Right cardiac atrium (tissue), 5 donors: ENCODE measurements at regions of chr9 and their contacts with region 1.

Region 1: GRCh38 chr9:757246-757881 is 84.1 kb upstream of the DMRT1 start:
- DNase-seq: peak in 2 of 3 donors; percentile 55 to 67
- ATAC-seq: peak; percentile 67 to 75
- H3K4me3 ChIP-seq: no peak overlapping the region
- H3K27ac ChIP-seq: no peak overlapping the region
- H3K4me1 ChIP-seq: no peaks in the 10 kb centered on the region
- H3K27me3 ChIP-seq: no peaks in the 10 kb centered on the region

Region 2: DNA sequence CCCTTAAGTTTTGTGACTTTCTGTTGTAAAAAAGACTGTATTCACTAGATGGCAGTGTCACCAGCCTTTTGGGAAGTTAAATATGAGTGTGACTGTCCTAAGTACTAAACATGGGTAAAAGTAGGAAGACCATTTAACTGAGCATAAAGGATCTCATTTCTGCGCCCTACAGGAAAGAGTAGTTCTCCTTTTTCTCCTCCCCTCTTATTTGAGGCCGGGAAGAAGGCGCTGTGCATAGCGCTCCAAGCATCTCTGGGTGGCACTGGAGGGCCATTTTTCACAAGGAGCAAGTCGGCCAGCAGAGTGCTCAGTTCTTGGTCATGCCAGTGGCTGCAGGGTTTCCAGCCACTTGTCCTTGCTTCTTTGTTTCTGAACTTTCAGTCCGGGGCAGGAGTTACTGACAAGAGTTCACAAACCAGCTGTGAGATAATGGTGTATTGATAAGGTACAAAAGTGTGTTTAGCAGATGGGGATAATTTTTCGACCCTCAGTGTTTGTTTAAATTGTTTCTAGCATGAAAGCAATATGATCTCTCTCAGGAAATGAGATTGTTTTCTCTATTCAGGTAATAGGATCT is 143.5 kb before region 1 on chr9:
- intact Hi-C with region 1: loop called (anchors 5 kb)
- DNase-seq: peak; percentile 75 to 89 (median 83)
- ATAC-seq: peak; percentile 92 to 95
- H3K4me3 ChIP-seq: no peak overlapping the region
- H3K27ac ChIP-seq: peak overlapping the region; percentile 20
- H3K4me1 ChIP-seq: no peaks in the 10 kb centered on the region
- H3K27me3 ChIP-seq: no peaks in the 10 kb centered on the region

Region 3: GRCh38 chr9:693201-694091 is 63.9 kb before region 1 on chr9:
- intact Hi-C with region 1: loop called in 1 of 4 experiments (anchors 10 kb)
- DNase-seq: peak in 2 of 3 donors; percentile 40 to 72
- ATAC-seq: peak; percentile 73 to 77
- H3K4me3 ChIP-seq: peak overlapping the region; percentile 77
- H3K27ac ChIP-seq: peak overlapping the region; percentile 99
- H3K4me1 ChIP-seq: peaks cover 16% of the 10 kb centered on the region
- H3K27me3 ChIP-seq: no peaks in the 10 kb centered on the region